ENCODE measurements at regions of chr3 and their contacts with region 1.

Region 1: DNA sequence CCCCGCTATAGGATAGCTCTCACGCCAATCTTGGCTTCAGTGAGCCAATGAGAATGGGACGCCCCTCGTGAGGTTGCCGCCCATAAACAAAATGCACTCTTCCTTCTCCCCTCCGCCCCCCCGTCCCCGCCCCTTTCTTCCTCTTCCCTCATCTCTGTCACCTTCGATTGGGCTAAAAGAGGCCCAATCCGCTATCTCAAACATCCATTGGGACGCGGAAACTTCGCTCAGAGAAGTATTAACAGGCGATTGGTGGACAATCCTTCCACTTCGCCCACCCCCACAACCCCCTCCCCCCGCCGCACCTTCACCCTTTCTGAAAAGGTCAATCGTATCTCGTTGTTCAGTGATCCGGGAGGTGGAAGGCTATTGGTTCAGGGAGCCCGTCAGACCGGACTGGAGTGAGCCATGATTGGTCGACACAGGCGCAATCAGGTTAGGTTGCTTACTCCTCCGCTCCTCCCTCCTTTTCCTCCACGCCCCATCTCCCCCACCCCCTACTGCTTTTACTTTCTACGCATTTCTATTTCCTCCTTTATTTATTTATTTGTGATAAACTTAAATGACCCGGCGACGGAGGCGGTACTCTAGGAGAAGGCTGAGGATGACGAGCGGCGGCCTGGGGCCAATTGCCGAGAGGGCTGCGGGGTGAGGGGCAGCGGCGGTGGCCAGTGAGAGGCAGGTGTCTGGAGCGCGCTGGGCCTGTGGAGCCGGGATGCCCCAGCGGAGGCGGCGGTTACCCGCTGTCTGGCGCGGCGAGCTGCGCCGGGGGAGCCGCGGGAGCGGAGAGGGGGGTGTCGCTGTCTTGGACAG is 447 bp upstream of the ZBTB20 start:
- DNase-seq: peak; percentile 84 to 99 (median 98)
- ATAC-seq: peak; percentile 83
- H3K4me3 ChIP-seq: peak overlapping the region; percentile 65
- H3K4me3 Mint-ChIP-seq: peak overlapping the region; percentile 93 to 100 (median 96)
- H3K27ac ChIP-seq: peak overlapping the region; percentile 98
- H3K27ac Mint-ChIP-seq: peak overlapping the region; percentile 97 to 100 (median 100)
- H3K4me1 ChIP-seq: peaks cover 15 to 18% of the 10 kb centered on the region in 2 donors
- H3K4me1 Mint-ChIP-seq: peaks cover 16 to 45% (median 24%) of the 10 kb centered on the region in 7 donors
- H3K27me3 ChIP-seq: no peaks in the 10 kb centered on the region
- H3K27me3 Mint-ChIP-seq: peaks cover 0 to 8% (median 0%) of the 10 kb centered on the region in 5 donors

Region 2: DNA sequence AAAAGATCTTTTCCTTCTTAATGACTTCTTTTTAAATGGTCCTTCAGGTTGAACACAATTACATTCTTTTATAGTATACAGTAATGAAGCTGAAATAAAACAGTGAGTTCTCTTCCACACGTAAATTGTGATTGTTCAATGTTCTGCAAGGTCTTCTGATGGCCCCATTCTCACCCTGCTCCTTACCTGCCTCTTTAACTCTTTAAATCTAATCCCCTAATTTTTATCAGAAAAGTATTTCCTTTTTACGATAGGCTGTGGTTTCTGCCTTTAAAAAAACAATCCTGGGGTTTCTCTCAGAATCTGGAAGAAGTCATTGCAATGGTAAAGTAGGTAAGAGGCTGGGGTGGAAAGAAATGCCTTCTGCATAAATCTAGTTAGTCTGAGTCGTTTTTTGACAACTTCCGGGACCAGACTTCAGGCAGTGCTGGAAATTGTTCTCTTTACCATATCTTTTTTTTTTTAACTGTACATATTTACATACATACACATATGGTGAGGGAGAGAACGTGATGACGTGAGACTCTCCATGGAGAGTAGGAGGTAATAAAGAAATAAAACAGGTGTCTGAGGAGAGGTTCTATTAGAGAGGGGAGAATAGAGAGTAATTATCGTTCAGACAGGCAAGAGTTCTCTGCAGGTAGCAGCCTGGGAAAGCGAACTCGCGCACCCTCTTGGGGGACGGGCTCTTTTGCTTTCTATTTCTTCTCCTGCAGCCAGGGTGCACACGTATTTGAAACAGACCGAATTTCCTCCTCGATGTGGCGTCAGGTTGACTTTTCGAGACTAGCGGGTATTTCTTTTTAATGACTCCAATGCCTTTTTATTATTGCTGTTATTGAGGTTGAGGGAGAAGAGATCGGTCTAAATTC is 1615.5 kb before region 1 on chr3 and contains the start of gene SIDT1:
- CTCF ChIA-PET with region 1: no interaction called
- POLR2A ChIA-PET with region 1: no interaction called
- intact Hi-C with region 1: loop called (anchors 2 to 10 kb)
- DNase-seq: peak; percentile 31 to 87 (median 78)
- ATAC-seq: peak; percentile 87
- H3K4me3 ChIP-seq: peak within 1 kb of the TSS; percentile 96
- H3K4me3 Mint-ChIP-seq: peak within 1 kb of the TSS; percentile 92 to 100 (median 98)
- H3K27ac ChIP-seq: peak within 1 kb of the TSS; percentile 95
- H3K27ac Mint-ChIP-seq: peak within 1 kb of the TSS; percentile 97 to 100 (median 99)
- H3K4me1 ChIP-seq: peaks cover 28 to 40% of the 10 kb centered on the region in 2 donors
- H3K4me1 Mint-ChIP-seq: peaks cover 33 to 69% (median 57%) of the 10 kb centered on the region in 7 donors
- H3K27me3 ChIP-seq: no peaks in the 10 kb centered on the region
- H3K27me3 Mint-ChIP-seq: peaks cover 0 to 16% (median 0%) of the 10 kb centered on the region in 5 donors
- total RNA-seq, gene SIDT1: 32.1 to 65.7 (median 60.7) TPM

Region 3: GRCh38 chr3:113947372-113948014 is 1200.0 kb before region 1 on chr3 and contains the start of gene ZDHHC23:
- CTCF ChIA-PET with region 1: no interaction called
- POLR2A ChIA-PET with region 1: no interaction called
- intact Hi-C with region 1: loop called in 1 of 2 experiments (anchors 5 kb)
- DNase-seq: peak; percentile 55 to 82 (median 69)
- ATAC-seq: peak; percentile 92
- H3K4me3 ChIP-seq: peak within 1 kb of the TSS; percentile 62
- H3K4me3 Mint-ChIP-seq: peak within 1 kb of the TSS; percentile 79 to 94 (median 86)
- H3K27ac ChIP-seq: peak within 1 kb of the TSS; percentile 42
- H3K27ac Mint-ChIP-seq: peak within 1 kb of the TSS in 7 of 9 donors; percentile 33 to 81 (median 59)
- H3K4me1 ChIP-seq: peaks cover 0 to 8% of the 10 kb centered on the region in 2 donors
- H3K4me1 Mint-ChIP-seq: peaks cover 8 to 20% (median 13%) of the 10 kb centered on the region in 7 donors
- H3K27me3 ChIP-seq: no peaks in the 10 kb centered on the region
- H3K27me3 Mint-ChIP-seq: peaks cover 9 to 60% (median 14%) of the 10 kb centered on the region in 5 donors
- total RNA-seq, gene ZDHHC23: 2.1 to 3.4 (median 3.2) TPM

Region 4: DNA sequence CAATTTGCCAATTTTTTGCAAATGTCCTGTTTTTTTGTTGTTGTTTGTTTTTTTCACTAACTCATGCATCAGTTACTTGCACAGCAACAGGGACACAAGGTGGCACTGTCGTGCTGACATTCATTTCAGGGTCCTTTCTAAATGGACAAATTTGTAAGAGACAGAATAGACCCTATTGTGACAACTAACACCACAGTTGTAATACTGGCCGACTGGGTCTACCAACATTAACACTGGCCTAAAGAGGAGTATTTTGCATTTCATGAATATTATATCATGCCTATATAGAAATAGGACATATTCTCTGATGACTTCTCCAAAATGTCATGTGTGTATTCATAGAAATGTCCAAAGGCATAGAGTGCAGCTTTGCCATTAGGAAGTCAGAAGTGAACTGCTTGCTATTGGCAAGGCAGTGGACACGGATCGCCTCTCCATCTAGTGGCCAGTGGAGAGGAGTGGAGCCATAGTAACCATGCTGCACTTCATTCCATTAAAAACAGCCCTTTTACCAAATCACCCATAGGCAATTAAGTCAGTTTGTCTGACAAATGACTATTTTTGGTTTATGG is 55.2 kb before region 1 on chr3:
- CTCF ChIA-PET with region 1: interaction called, 5 read pairs
- POLR2A ChIA-PET with region 1: interaction called, 22 read pairs
- intact Hi-C with region 1: loop called (anchors 1 to 2 kb)
- DNase-seq: peak; percentile 24 to 62 (median 44)
- ATAC-seq: peak; percentile 76
- H3K4me3 ChIP-seq: no peak overlapping the region
- H3K4me3 Mint-ChIP-seq: no peak overlapping the region
- H3K27ac ChIP-seq: no peak overlapping the region
- H3K27ac Mint-ChIP-seq: peak overlapping the region in 5 of 9 donors; percentile 6 to 46 (median 32)
- H3K4me1 ChIP-seq: peaks cover 0 to 9% of the 10 kb centered on the region in 2 donors
- H3K4me1 Mint-ChIP-seq: peaks cover 3 to 73% (median 44%) of the 10 kb centered on the region in 7 donors
- H3K27me3 ChIP-seq: no peaks in the 10 kb centered on the region
- H3K27me3 Mint-ChIP-seq: no peaks in the 10 kb centered on the region

Region 5: GRCh38 chr3:115134648-115135347 is 12.7 kb before region 1 on chr3:
- CTCF ChIA-PET with region 1: interaction called, 9 read pairs
- POLR2A ChIA-PET with region 1: interaction called, 32 read pairs
- intact Hi-C with region 1: no loop called
- DNase-seq: no peak
- ATAC-seq: no peak
- H3K4me3 ChIP-seq: no peak overlapping the region
- H3K4me3 Mint-ChIP-seq: no peak overlapping the region
- H3K27ac ChIP-seq: no peak overlapping the region
- H3K27ac Mint-ChIP-seq: no peak overlapping the region
- H3K4me1 ChIP-seq: no peaks in the 10 kb centered on the region
- H3K4me1 Mint-ChIP-seq: peaks cover 0 to 26% (median 14%) of the 10 kb centered on the region in 7 donors
- H3K27me3 ChIP-seq: no peaks in the 10 kb centered on the region
- H3K27me3 Mint-ChIP-seq: no peaks in the 10 kb centered on the region

Region 6: DNA sequence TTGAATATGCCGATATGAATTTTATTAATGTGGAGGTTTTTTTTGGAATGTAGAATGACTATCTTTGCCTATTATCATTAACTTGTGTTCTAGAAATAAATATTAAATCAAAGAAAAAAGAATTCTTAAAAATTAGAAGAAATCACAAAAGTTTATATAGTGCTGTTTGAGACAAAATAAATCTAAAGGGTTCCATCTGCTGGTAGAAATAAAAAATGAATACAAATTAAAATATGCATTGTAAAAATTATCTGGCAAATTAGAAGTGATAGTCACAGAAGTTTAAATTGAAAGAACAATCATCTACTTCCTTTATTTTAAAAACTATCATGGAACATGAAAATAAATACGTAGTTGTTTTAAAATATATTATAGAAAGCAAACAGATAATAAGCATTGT is 22.3 kb after region 1 on chr3:
- CTCF ChIA-PET with region 1: interaction called, 10 read pairs
- POLR2A ChIA-PET with region 1: interaction called, 111 read pairs
- intact Hi-C with region 1: loop called (anchors 1 kb)
- DNase-seq: peak in 5 of 9 donors; percentile 14 to 36 (median 23)
- ATAC-seq: no peak
- H3K4me3 ChIP-seq: no peak overlapping the region
- H3K4me3 Mint-ChIP-seq: no peak overlapping the region
- H3K27ac ChIP-seq: no peak overlapping the region
- H3K27ac Mint-ChIP-seq: no peak overlapping the region
- H3K4me1 ChIP-seq: peaks cover 11 to 13% of the 10 kb centered on the region in 2 donors
- H3K4me1 Mint-ChIP-seq: peaks cover 7 to 13% (median 12%) of the 10 kb centered on the region in 7 donors
- H3K27me3 ChIP-seq: no peaks in the 10 kb centered on the region
- H3K27me3 Mint-ChIP-seq: peaks cover 0 to 10% (median 0%) of the 10 kb centered on the region in 5 donors

Region 7: DNA sequence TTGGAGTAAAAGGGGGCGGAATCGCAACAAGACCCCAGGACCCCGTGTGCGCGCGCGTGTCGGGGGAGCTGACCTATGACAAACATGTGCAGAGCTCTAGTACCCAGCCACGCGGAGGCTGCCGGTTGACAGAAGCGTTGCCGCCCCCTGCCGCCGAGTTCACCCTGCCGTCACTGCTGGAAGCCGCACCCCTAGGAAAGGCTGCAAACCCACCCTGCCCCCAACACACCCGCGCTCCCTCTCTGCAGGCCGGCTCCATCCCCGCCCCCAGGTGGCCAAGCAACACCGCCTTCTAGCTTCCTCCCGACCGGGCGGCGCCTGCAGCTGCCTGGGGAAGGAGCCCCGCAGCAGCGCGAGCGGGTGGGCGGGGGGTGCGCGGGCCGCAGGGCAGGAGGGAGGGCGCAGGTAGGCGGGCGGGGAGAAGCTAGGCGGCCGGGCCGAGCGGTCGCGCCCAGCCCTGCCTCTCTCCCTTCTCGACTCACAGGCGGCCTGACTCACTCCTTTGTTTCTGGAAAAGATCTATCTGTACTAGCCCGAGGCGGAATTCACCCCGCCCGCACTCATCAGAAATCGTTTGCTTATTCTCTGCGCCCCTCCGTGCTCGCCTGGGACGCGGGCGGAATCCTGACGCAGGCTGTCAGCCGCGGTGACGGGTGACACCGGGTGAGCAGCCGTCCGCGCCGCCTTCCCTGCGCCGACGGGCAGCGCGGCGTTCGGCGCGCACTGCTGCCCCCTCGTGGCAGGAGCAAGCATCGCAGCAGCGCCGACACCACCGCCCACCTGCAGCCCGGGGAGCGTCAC is 636.6 kb after region 1 on chr3:
- CTCF ChIA-PET with region 1: no interaction called
- POLR2A ChIA-PET with region 1: interaction called, 4 read pairs
- intact Hi-C with region 1: loop called (anchors 1 kb)
- DNase-seq: peak; percentile 88 to 94 (median 92)
- ATAC-seq: peak; percentile 92
- H3K4me3 ChIP-seq: peak overlapping the region; percentile 54
- H3K4me3 Mint-ChIP-seq: peak overlapping the region; percentile 80 to 97 (median 91)
- H3K27ac ChIP-seq: peak overlapping the region; percentile 99
- H3K27ac Mint-ChIP-seq: peak overlapping the region; percentile 79 to 99 (median 98)
- H3K4me1 ChIP-seq: peaks cover 3% of the 10 kb centered on the region in 2 donors
- H3K4me1 Mint-ChIP-seq: peaks cover 8 to 16% (median 14%) of the 10 kb centered on the region in 7 donors
- H3K27me3 ChIP-seq: no peaks in the 10 kb centered on the region
- H3K27me3 Mint-ChIP-seq: peaks cover 0 to 25% (median under 1%) of the 10 kb centered on the region in 5 donors